ENCODE measurements at regions of chr15 and their contacts with region 1.

Region 1: DNA sequence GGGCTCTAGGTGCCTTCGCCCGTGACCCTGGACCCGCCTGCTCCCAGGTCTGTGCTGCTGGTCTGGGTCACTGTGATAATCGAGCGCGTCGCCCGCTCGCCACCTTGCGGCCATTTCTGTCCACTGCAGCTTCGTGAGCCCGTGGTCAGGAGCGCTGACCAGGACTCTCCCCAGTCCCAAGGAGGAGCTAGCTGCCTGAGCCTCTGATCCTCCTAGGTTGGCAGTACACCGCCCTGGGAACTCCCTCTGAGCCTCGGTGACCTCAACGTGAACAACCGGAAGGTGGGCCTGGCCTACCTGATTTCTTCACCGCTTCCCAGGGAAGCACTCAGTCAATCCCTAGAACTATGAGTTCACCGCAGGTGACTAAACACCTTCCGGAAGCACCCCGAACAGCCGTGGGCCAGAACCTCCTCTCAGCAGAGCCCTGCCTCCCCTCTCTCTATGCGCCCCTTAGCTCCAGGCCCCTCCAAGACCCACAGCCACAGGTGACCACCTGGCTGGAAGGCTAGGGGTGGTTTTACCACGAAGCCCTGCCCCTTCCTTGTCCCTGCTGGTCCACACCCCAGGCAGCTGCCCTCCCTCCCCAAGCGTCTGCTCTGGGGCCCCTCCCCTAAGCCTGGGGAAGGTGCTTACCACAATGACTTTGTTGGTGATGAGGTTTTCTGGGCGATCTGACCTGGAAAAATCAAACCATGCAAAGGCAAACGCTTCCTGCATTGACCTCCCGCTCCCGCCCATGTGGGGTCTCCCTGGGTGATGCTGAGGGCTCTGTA is 9.7 kb downstream of the PLA2G4D start:
- DNase-seq: peak; percentile 96
- H3K4me3 Mint-ChIP-seq: peak overlapping the region; percentile 65
- H3K27ac Mint-ChIP-seq: peak overlapping the region; percentile 77
- H3K4me1 Mint-ChIP-seq: peaks cover 26% of the 10 kb centered on the region
- H3K27me3 Mint-ChIP-seq: no peaks in the 10 kb centered on the region
- CTCF ChIP-seq: peak; percentile 86

Region 2: DNA sequence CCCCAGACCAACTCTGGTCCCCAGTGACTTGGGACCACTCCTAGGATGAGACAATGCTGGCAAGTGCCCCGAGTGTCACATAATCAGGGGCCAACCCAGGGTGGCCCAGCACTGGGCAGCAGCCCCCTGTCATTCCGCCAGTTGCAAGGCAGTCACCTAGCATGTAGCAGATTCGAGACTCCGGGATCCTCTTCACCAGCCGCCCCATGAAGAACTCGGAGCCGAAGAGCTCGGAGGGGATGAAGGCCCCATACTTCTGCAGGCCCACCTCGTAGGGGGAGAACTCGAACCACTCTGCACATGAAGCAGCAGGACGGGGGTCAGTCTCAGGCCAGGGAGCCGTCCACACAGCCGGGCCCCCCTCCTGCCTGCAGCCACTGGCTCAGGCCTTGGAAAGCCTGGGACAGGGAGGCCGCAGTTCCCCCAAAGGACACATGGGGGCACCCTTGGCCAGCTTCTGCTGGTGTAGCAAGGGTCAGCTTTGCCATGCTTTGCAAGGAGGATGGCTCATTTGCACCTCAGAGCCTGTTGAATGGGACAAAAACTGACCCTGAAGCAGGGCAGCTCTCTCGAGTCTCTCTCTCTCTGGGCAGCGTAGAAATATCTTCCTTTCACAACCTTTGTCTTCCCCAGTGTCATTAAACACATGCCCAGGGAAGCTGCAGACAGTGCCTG is 95.3 kb before region 1 on chr15:
- CTCF ChIA-PET with region 1: interaction called, 69 read pairs
- POLR2A ChIA-PET with region 1: interaction called, 4 read pairs
- intact Hi-C with region 1: loop called (anchors 1 kb)
- DNase-seq: peak; percentile 83
- H3K4me3 Mint-ChIP-seq: no peak overlapping the region
- H3K27ac Mint-ChIP-seq: no peak overlapping the region
- H3K4me1 Mint-ChIP-seq: no peaks in the 10 kb centered on the region
- H3K27me3 Mint-ChIP-seq: no peaks in the 10 kb centered on the region
- CTCF ChIP-seq: peak; percentile 98

Region 3: DNA sequence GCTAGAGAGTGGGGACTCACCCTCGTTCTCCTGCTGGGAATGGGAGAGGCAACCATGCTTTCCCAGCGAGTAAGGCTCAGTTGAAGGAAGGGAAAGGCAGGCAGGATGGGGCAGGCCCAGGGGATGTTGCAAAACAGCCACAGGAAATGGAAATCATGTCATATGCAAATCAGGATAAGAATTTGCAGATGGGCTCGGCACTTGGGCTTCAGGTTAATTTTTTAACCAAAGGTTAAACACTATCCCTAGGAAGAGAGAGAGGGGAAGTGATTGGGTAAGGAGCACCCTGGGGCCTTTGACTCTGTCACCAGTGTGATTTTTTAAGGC is 49.2 kb before region 1 on chr15:
- CTCF ChIA-PET with region 1: no interaction called
- POLR2A ChIA-PET with region 1: no interaction called
- intact Hi-C with region 1: no loop called
- DNase-seq: peak; percentile 97
- H3K4me3 Mint-ChIP-seq: peak overlapping the region; percentile 32
- H3K27ac Mint-ChIP-seq: peak overlapping the region; percentile 6
- H3K4me1 Mint-ChIP-seq: peaks cover 11% of the 10 kb centered on the region
- H3K27me3 Mint-ChIP-seq: no peaks in the 10 kb centered on the region
- CTCF ChIP-seq: no peak

Region 4: GRCh38 chr15:42100021-42100800 is 15.6 kb after region 1 on chr15:
- CTCF ChIA-PET with region 1: interaction called, 38 read pairs
- POLR2A ChIA-PET with region 1: interaction called, 18 read pairs
- intact Hi-C with region 1: no loop called
- DNase-seq: peak; percentile 13
- H3K4me3 Mint-ChIP-seq: no peak overlapping the region
- H3K27ac Mint-ChIP-seq: no peak overlapping the region
- H3K4me1 Mint-ChIP-seq: peaks cover 6% of the 10 kb centered on the region
- H3K27me3 Mint-ChIP-seq: no peaks in the 10 kb centered on the region
- CTCF ChIP-seq: no peak

Region 5: DNA sequence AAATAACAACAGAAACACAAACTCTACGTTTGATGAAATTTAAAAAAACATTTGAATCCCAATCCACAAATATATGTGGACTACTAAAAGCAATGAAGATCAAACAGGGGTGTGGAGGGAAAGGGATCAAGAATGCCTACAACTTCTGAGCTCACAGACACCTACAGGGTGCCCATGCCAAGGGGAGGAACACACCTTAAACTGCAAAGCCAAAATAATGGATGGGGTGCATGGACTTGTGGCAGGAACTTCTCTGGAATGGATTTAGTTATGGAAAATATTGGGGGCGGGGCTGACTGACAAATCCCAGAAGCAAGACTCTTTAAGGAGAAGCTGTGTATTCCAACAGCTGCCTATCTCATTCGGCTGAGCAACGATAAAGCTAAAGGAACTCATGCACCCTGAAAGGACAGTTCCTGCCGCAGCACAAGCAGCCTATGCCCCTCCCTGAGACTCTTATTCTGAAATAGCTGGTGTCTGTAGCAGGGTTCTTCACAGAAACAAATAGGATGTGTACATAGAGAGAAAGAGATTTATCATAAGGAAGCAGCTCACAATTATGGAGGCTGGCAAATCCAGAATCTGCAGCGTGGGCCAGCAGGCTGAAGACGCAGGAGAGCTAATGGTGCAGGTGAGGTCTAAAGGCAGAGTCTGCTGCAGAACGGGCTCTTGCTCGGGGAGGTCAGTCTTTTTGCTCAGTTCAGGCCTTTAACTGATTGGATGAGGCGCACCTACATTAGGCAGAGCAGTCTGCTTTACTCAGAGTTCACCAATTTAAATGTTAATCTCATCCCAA is 34.2 kb after region 1 on chr15:
- CTCF ChIA-PET with region 1: interaction called, 31 read pairs
- POLR2A ChIA-PET with region 1: interaction called, 9 read pairs
- intact Hi-C with region 1: no loop called
- DNase-seq: no peak
- H3K4me3 Mint-ChIP-seq: no peak overlapping the region
- H3K27ac Mint-ChIP-seq: no peak overlapping the region
- H3K4me1 Mint-ChIP-seq: peaks cover 18% of the 10 kb centered on the region
- H3K27me3 Mint-ChIP-seq: no peaks in the 10 kb centered on the region
- CTCF ChIP-seq: no peak

Region 6: DNA sequence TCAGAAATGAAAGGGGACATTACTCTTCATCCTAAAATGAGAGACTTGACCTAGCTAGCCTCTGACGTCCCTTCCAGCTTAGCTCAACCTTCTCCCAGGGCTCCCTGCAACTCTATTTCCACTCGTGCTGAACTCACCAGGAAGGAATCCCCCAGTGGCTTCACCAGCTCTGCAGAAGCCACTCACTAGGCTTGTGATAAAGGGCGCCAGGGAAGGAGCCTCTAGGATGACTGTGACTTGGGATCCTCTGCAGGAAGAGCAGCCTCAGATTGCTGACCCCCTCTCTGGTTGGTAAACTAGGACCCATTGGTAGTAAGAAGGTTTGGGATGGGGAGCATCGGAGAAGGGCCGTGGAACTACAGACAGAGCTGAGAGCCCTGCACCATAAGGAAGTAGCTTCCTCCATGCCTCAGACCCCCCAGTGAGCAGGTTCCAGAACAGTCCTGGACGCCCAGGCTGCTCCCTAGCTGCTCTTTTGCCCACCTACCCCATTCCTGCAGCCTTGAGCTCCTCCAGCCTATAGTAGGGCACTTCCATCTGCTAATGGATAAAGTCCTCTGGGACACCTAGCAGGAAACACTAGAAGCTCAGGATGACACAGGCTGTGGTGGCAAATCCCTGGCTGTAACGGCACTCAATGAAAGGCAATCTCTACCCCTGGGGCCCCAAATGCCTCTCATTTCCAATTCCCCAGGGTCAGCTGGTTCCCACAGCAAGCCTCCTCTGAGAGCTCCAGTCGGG is 45.8 kb after region 1 on chr15:
- CTCF ChIA-PET with region 1: interaction called, 127 read pairs
- POLR2A ChIA-PET with region 1: interaction called, 6 read pairs
- intact Hi-C with region 1: no loop called
- DNase-seq: no peak
- H3K4me3 Mint-ChIP-seq: no peak overlapping the region
- H3K27ac Mint-ChIP-seq: no peak overlapping the region
- H3K4me1 Mint-ChIP-seq: peaks cover 15% of the 10 kb centered on the region
- H3K27me3 Mint-ChIP-seq: peaks cover 19% of the 10 kb centered on the region
- CTCF ChIP-seq: no peak

Region 7: GRCh38 chr15:42474827-42475226 is 390.2 kb after region 1 on chr15:
- CTCF ChIA-PET with region 1: no interaction called
- POLR2A ChIA-PET with region 1: no interaction called
- intact Hi-C with region 1: loop called (anchors 5 kb)
- DNase-seq: no peak
- H3K4me3 Mint-ChIP-seq: no peak overlapping the region
- H3K27ac Mint-ChIP-seq: no peak overlapping the region
- H3K4me1 Mint-ChIP-seq: peaks cover 6% of the 10 kb centered on the region
- H3K27me3 Mint-ChIP-seq: no peaks in the 10 kb centered on the region
- CTCF ChIP-seq: no peak

Measured in MCF 10A (cell line).